Gastrocnemius medialis (tissue), 4 donors: ENCODE measurements at regions of chr6 and their contacts with region 1.

Region 1: DNA sequence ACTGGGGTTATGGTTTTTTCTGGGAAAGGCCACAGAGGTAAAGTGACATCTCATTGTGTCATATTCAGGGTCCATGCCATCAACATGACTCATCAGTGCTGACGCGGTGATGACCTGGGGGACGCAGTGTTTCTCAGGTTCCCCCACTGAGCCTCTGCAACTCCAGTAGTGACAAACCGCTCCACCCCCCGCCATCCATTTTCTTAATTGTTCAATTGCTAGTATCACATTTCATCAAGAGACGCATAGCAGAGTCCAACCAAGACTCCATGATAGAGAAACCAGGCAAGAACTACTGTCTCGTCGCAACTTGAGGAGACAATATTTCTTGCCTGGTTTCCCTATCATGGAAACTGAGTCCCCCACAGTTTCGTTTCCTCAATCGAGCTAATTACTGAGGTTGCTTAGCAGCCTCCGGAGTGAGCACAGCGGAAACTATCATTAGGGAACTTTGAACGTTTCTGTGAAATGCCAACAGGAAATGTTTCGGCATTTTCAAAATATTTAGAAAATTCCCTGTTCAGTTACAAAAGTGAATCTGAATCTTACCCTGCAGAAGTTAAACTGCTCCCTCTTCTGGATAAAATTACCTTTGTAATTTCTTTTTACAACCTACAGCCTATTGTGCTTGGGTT is 12.2 kb upstream of the SERPINB1 start:
- DNase-seq: peak in 1 of 2 donors; percentile 71
- ATAC-seq: peak; percentile 49 to 85
- H3K4me3 ChIP-seq: peak overlapping the region; percentile 50 to 59 (median 54)
- H3K27ac ChIP-seq: peak overlapping the region; percentile 43 to 78 (median 66)
- H3K4me1 ChIP-seq: peaks cover 6 to 19% of the 10 kb centered on the region in 2 donors
- H3K27me3 ChIP-seq: no peaks in the 10 kb centered on the region
- CTCF ChIP-seq: peak in 3 of 5 experiments; percentile 20 to 47 (median 38)
- POLR2A ChIP-seq: no peak

Region 2: GRCh38 chr6:2596222-2596621 is 257.7 kb before region 1 on chr6:
- in situ Hi-C with region 1: no loop called
- intact Hi-C with region 1: no loop called
- DNase-seq: no peak
- ATAC-seq: no peak
- H3K4me3 ChIP-seq: no peak overlapping the region
- H3K27ac ChIP-seq: no peak overlapping the region
- H3K4me1 ChIP-seq: no peaks in the 10 kb centered on the region
- H3K27me3 ChIP-seq: no peaks in the 10 kb centered on the region
- CTCF ChIP-seq: peak in 2 of 5 experiments; percentile 17 to 25
- POLR2A ChIP-seq: no peak

Region 3: GRCh38 chr6:2791124-2791974 is 62.5 kb before region 1 on chr6:
- in situ Hi-C with region 1: loop called in 3 of 4 experiments (anchors 10 kb)
- intact Hi-C with region 1: loop called (anchors 2 kb)
- DNase-seq: peak; percentile 61 to 78
- ATAC-seq: peak; percentile 84 to 85
- H3K4me3 ChIP-seq: peak overlapping the region in 3 of 4 donors; percentile 24 to 29 (median 27)
- H3K27ac ChIP-seq: peak overlapping the region; percentile 78 to 80 (median 79)
- H3K4me1 ChIP-seq: peaks cover 23 to 31% of the 10 kb centered on the region in 2 donors
- H3K27me3 ChIP-seq: no peaks in the 10 kb centered on the region
- CTCF ChIP-seq: peak; percentile 74 to 84 (median 78)
- POLR2A ChIP-seq: no peak